ENCODE measurements at regions of chr15 and their contacts with region 1.

Region 1: DNA sequence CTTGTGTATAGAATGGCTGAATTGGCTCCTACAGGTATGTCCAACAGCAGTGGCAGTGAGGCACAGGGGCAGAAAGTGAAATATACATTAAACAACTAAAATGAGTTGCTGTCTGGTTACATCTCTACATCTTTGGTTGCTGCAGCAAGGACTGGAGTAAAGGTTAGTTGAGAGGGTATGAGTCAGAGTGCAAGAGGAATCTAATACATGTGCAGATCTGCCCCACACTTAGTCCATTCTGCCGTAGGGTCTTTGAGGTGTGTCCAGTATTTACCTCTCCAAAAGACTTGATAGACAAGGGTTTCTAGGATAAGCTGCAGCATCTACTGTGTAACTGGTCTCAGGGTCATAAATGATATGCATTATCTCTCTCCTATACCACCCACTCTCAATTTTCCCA is 6.2 kb upstream of the NEDD4 start:
- DNase-seq: no peak
- H3K4me3 ChIP-seq: no peak overlapping the region
- H3K27ac ChIP-seq: no peak overlapping the region
- H3K4me1 ChIP-seq: peaks cover 0 to 2% of the 10 kb centered on the region in 2 donors
- H3K27me3 ChIP-seq: no peaks in the 10 kb centered on the region
- CTCF ChIP-seq: no peak

Region 2: GRCh38 chr15:55204464-55204863 is 795.2 kb before region 1 on chr15:
- intact Hi-C with region 1: no loop called
- DNase-seq: no peak
- H3K4me3 ChIP-seq: no peak overlapping the region
- H3K27ac ChIP-seq: no peak overlapping the region
- H3K4me1 ChIP-seq: no peaks in the 10 kb centered on the region
- H3K27me3 ChIP-seq: no peaks in the 10 kb centered on the region
- CTCF ChIP-seq: no peak

Region 3: GRCh38 chr15:56017920-56018319 is 18.3 kb after region 1 on chr15:
- intact Hi-C with region 1: loop called (anchors 2 kb)
- DNase-seq: no peak
- H3K4me3 ChIP-seq: no peak overlapping the region
- H3K27ac ChIP-seq: no peak overlapping the region
- H3K4me1 ChIP-seq: no peaks in the 10 kb centered on the region
- H3K27me3 ChIP-seq: no peaks in the 10 kb centered on the region
- CTCF ChIP-seq: no peak